Mammary epithelial cell (primary cell): ENCODE measurements at regions of chr10 and their contacts with region 1.

Region 1: DNA sequence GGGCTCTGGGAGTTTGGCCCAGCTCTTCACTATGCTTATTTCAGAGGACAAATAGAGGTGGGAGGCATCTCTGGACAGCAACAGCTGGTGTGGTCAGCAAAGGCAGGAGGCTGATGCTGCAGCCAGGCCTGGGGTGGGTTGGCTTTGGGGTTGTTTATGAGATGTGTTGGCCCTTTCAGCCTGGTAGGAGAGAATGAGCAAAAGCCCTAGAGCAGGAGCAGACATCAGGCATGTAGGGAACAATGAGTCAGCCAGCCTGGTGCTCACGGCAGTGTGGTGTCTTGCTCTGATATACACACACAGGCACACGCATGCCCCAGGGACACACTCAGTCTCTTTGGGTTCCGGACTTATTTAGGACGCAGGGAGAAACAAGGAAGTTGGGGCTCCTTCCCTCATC is 157.1 kb downstream of the PRKCQ start:
- DNase-seq: peak; percentile 83
- H3K4me3 ChIP-seq: no peak overlapping the region
- H3K27ac ChIP-seq: no peak overlapping the region
- H3K4me1 ChIP-seq: peaks cover 8% of the 10 kb centered on the region
- H3K27me3 ChIP-seq: no peaks in the 10 kb centered on the region
- CTCF ChIP-seq: no peak

Region 2: GRCh38 chr10:6514844-6515780 is 92.1 kb after region 1 on chr10:
- CTCF ChIA-PET with region 1: no interaction called
- dilution Hi-C with region 1: loop called (anchors 5 kb)
- in situ Hi-C with region 1: no loop called
- intact Hi-C with region 1: no loop called
- DNase-seq: no peak
- H3K4me3 ChIP-seq: no peak overlapping the region
- H3K27ac ChIP-seq: no peak overlapping the region
- H3K4me1 ChIP-seq: no peaks in the 10 kb centered on the region
- H3K27me3 ChIP-seq: no peaks in the 10 kb centered on the region
- CTCF ChIP-seq: no peak

Region 3: GRCh38 chr10:7424315-7424714 is 1001.3 kb after region 1 on chr10:
- CTCF ChIA-PET with region 1: no interaction called
- dilution Hi-C with region 1: no loop called
- in situ Hi-C with region 1: loop called (anchors 10 kb)
- intact Hi-C with region 1: no loop called
- DNase-seq: no peak
- H3K4me3 ChIP-seq: no peak overlapping the region
- H3K27ac ChIP-seq: no peak overlapping the region
- H3K4me1 ChIP-seq: no peaks in the 10 kb centered on the region
- H3K27me3 ChIP-seq: no peaks in the 10 kb centered on the region
- CTCF ChIP-seq: no peak